Head of caudate nucleus (tissue), 42 donors: ENCODE measurements at regions of chr2 and their contacts with region 1.

Region 1: DNA sequence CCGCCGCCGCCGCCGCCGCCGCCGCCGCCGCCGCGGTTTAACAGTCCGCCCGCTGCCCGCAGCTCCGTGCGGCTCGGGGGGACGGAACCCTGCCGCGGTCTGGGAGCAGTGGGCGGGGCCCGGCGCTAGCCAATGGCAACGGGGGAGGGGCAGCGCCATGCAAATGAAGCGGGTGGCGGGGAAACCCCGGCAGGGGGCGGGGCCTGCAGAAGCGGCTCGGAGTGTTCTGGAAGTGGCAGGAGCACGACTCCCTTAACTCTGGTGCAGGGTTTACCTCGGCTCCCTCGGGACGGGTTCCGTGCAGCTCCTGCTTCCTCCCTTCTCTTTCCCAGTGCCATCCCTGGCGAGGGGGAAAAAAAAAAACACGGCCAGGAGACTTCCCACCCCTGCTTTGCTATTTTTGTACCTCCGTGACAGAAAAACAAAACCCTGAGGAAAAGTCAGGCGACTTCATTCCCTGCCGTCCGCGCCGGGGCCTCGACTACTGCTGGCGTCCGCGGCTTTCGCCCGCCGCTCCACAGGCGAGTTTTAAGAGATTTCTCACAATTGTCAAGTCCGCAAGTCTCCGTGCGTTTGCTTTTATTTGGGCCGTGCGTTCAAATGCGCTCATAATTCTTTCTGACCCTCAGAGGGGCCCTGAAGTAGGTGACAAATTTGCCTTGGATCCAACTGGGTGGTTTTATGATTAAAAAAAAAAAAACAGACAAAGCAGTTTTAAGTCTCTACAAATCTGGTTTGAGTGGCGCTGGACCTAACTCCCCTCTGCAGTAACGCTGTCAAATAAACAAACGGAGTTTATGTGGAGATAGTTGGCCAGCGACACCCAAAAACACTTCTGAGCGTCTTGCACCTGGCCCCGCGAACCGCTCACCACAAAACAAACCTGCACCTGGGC is at the start of gene KANSL1L:
- DNase-seq: peak; percentile 97 to 100 (median 99)

Region 2: GRCh38 chr2:209933499-209934483 is 237.8 kb before region 1 on chr2:
- intact Hi-C with region 1: loop called (anchors 5 kb)
- DNase-seq: peak in 31 of 42 donors; percentile 10 to 86 (median 63)

Region 3: DNA sequence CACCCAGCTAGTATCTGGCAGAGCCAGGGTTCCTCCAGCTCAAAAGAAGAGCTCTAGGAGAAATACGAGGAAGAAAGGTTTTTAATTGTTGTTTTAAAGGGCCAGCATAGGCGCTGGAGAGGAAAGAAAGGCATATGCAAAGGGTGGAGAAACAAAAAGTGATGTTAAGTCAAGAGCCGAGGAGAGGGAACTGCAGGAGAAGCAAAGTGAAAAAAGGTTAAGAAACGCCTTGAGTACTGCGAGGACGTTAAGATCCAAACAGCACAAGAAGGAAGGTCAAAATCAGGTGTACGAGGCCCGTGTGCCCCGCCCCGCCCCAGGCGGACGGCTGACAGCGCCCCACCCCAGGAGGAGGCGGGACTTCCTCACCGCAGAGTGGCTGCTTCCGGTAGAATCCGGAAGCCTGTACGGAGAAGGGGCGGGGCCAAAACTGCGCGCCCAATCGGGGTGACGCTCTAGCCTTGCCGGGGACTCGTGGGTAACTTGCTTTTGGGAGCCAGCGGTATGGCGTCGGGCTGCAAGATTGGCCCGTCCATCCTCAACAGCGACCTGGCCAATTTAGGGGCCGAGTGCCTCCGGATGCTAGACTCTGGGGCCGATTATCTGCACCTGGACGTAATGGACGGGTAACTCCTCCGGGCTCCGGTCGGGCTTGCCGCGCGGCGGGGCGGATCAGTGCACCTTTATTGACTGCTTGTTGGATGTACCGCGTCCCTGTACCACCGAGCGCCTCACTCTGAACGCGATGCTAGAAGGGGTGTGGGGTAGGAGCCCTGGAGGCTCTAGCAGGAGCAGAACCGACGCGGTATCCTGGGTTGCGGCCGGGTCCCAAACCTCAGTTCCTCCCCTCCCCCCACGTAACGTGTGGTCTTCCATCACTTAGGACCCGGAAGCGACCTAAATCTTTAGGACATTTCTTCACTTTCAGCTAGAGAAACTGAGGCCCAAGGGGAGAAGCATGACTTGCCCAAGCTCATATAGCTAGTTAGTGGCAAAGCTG is 169.1 kb before region 1 on chr2 and contains the start of gene RPE:
- intact Hi-C with region 1: loop called (anchors 5 kb)
- DNase-seq: peak; percentile 89 to 98 (median 95)

Region 4: DNA sequence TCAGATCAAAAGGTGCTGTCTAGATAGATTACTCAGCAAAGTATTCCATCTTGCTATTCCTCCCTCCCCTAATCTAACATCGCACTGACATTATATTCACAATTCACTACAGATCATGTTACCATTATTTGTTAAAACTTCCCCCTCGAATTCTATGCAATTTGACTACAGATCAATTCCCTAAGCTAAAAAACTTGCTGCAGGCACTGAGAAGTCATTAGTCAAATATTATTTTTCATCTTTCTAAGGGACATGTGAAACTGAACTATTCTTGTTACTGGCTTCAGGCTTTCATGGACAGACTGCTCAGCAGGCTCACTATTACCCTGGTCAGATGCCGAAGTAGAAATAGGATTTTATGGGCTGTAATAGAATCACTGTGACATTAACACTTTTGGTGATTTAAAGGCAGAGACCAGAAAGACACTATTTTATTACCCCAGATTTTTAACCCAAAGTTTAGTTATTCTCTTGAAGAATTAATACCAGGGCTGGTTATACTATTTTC is 128.4 kb after region 1 on chr2:
- intact Hi-C with region 1: no loop called
- DNase-seq: no peak